Right ventricle myocardium inferior (tissue), 1 donor: ENCODE measurements at regions of chr6 and their contacts with region 1.

Region 1: DNA sequence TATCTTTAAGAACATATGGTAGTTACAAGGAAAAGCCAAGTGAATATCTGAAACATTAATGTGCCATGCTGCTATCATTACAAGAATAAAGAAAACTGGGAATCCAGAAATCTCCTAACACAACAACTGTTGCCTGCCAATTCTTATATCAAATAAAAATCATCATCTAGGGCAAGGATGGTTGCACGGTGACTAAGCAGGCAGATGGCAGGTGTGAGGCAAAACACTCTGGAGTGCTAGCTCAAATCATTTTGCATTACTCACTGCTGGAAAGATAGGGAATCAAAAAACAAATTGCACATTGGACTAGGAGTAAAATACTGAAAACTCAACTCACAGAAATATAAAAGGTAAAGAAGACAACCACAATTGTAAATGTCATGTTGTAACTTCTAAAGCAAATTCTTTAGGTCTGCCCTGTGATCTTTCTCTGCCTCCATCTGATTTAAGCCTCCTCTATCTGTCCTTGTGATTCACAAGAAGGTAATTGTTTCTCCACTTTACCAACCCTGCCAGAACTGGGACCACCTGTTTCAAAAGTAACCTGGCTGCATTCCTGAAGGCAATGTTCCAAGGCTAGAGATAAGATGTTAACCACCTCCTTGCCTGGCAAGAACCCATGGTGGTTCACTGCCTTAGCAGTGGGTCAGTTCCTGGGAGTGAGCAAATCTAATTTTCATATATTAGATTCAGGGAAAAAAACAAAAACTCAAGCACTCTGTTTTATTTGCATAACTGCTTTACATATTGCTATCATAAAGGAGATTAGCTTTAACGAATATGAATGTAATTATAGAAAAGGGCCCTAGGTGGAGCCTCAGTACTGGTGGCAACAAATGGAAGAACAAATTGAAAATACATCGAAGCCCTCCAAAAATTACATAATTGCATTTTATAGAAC is 33.1 kb upstream of the LCA5 start:
- DNase-seq: no peak
- ATAC-seq: no peak

Region 2: DNA sequence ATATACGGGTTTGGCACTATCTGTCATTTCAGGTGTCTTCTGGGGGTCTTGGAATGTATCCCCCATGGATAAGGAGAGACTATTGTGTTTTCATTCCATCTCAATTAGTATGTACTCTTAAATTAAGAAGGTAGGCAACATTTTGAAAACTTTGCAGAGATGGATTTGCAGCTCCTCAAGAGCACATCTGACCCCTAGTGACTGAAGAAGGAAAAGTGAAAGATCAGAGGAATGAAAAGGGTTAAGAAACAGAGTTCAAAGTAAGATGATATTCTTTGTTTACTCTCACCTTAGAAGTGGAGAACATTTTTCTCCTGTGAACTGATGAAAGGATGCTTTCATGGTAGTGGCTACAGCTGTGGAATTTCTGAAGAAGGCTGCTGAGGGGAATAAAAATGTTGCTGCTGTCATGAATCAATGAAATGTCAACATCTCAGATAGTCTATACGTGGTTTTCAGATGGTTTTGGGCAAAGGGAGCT is 102.3 kb after region 1 on chr6:
- intact Hi-C with region 1: loop called (anchors 2 kb)
- DNase-seq: no peak
- ATAC-seq: no peak

Region 3: GRCh38 chr6:79713701-79714322 is 143.4 kb after region 1 on chr6:
- intact Hi-C with region 1: loop called (anchors 2 kb)
- DNase-seq: no peak
- ATAC-seq: peak; percentile 67

Region 4: GRCh38 chr6:79813854-79814709 is 243.7 kb after region 1 on chr6:
- intact Hi-C with region 1: loop called (anchors 5 kb)
- DNase-seq: no peak
- ATAC-seq: no peak